Activated T-helper 2 cell treated with anti-CD3 and anti-CD28 coated beads, Interferon-gamma antibody, Interleukin-2, Interleukin-4, amounts not matched to agents 10 μg/mL and 5 μg/mL and 100 μg/mL, durations not matched to agents 14 hours and 24 hours and 36 hours (primary cell): ENCODE measurements at regions of chr3 and their contacts with region 1.

Region 1: DNA sequence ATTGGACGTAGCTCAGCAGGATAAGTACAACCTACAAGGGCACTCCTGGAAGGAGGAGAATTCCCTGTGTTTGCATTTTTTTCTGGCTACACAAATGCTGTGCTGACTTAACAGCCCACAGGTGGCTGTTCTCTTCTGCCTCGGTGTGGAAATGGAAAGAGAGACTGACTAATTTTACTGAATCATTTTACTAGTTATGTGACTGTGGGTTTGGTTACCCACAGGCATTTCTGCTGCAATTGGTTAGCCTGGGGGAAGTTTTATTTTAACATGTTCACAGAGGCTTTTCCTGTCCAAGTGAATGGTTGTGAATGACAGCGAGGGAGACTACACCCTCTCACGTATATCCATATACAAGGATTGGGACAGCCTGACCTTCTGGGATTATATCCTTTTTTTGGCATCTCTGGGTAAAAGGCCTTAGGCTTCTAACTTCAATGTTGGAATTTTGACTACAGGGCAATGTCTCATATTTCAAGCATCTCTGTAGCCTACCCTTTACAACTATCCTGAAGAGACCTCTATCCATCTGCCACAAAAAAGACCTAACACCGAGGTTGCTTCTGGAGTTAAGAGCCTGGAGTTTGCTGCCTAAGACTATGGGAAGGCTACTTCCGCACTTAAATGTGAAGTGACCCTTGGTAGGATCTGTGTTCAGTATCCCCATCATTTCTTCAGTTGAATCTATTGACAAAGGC is 67.2 kb upstream of the TP63 start:
- DNase-seq: peak; percentile 54
- H3K4me3 Mint-ChIP-seq: peak overlapping the region; percentile 0
- H3K27ac Mint-ChIP-seq: peak overlapping the region; percentile 19
- H3K4me1 Mint-ChIP-seq: peaks cover 55% of the 10 kb centered on the region
- H3K27me3 Mint-ChIP-seq: no peaks in the 10 kb centered on the region

Region 2: DNA sequence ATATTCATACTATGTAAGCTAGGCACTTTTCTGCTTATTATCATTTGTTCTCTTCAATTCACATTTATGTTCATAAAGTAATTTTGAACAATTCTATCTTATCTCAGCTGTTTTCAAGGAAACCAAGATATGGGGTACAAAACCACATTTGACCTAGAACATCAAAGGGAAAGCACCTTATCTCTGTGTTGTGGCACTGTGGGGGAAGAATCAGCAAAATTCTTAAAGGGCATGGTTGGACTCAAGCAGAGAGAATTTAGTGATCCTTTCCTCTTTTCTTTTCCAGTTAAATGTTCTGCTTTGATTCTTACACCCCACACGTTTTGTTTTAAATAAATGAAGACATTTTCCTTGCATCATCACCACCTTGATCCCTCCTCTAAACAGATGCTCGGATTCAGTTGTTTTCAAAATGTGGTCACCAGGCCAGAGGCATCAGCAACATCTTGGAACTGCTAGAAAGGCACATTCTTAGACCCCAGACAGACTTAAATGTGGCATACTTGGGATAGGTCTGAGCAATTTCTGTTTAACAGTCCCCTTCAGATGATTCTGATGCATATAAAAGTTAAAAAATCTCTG is 61.2 kb before region 1 on chr3:
- intact Hi-C with region 1: loop called (anchors 1 kb)
- DNase-seq: no peak
- H3K4me3 Mint-ChIP-seq: no peak overlapping the region
- H3K27ac Mint-ChIP-seq: peak overlapping the region; percentile 30
- H3K4me1 Mint-ChIP-seq: peaks cover 41% of the 10 kb centered on the region
- H3K27me3 Mint-ChIP-seq: no peaks in the 10 kb centered on the region

Region 3: GRCh38 chr3:189537135-189537534 is 26.9 kb before region 1 on chr3:
- intact Hi-C with region 1: loop called (anchors 1 kb)
- DNase-seq: no peak
- H3K4me3 Mint-ChIP-seq: no peak overlapping the region
- H3K27ac Mint-ChIP-seq: peak overlapping the region; percentile 30
- H3K4me1 Mint-ChIP-seq: peaks cover 23% of the 10 kb centered on the region
- H3K27me3 Mint-ChIP-seq: no peaks in the 10 kb centered on the region

Region 4: DNA sequence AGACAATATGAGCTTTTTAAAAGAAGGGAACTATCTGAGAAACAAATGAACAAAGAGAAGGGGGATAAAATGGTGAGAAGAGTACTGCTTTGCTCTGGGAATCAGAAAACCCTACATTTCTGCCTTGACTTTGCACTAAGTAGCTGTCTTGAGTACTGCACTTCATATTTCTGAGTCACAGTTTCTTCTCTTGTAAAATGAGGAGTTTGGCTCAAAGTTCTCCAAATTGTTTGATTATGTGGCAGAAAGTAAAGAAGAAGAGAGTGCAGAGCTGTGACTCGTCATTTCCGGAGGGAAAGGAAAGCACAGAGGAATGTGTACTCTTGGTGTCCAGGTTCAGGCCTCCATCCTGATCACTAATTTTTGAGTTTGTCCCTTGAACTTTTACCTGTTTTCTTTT is 121.8 kb after region 1 on chr3:
- intact Hi-C with region 1: loop called (anchors 2 kb)
- DNase-seq: no peak
- H3K4me3 Mint-ChIP-seq: no peak overlapping the region
- H3K27ac Mint-ChIP-seq: peak overlapping the region; percentile 51
- H3K4me1 Mint-ChIP-seq: peaks cover 43% of the 10 kb centered on the region
- H3K27me3 Mint-ChIP-seq: no peaks in the 10 kb centered on the region

Region 5: DNA sequence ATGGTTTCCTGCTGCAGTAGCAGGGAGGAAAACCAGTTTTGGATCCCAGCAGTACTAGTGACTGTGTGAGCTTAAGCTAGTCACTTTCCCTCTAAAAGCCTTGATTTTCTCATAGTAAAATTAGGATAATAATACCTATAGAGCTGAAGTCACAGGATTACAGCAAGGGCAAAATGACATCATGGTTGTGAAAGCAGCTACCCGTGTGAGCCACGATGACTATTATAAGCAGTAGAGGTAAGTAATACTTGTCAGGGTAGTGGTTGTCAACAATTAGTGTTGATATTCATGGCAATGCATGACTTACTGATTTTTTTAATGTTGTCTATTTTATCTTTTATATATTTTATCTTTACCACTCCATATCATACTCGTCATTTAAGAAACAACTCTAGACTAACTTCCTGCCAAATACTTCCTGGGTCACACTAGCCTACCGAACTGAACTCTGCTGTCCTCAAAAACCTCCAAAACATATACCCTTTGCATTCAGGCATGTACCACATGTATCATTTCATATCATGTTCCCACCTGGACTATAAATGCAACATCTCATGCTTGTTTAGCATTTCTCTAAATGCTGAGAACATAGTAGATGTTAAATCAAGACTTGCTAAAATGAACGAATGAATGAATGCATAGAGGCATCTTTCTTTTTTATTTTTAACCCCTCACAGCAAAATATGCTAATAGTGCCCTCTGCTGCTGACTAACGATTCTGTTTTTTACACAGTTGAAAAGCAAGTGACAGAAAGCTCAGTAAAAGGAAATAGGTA is 384.1 kb after region 1 on chr3:
- intact Hi-C with region 1: loop called (anchors 10 kb)
- DNase-seq: no peak
- H3K4me3 Mint-ChIP-seq: no peak overlapping the region
- H3K27ac Mint-ChIP-seq: no peak overlapping the region
- H3K4me1 Mint-ChIP-seq: peaks cover 18% of the 10 kb centered on the region
- H3K27me3 Mint-ChIP-seq: peaks cover 10% of the 10 kb centered on the region